ENCODE measurements at regions of chr4 and their contacts with region 1.

Region 1: DNA sequence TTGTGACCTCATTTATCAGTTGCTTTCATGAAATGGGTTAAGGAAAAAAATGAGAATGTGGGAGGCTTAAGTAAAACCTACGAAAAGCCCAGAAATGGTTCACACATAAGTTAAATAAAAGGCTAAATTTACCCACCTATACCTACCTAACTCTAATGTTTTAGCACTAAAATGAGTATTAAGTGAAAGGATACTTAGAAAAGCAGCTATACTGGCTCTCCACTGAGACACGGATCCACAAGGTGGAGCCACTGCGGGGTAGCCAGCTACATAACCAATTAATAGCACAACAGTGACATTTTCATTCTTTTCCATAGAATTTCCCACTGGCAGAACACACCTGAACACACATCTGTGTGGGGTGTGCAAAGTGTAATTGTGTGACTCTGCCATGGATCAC is 101.9 kb downstream of the MAML3 start:
- DNase-seq: peak in 2 of 4 experiments; percentile 24 to 30
- ATAC-seq: peak; percentile 78
- H3K4me3 ChIP-seq: no peak overlapping the region
- H3K27ac ChIP-seq: no peak overlapping the region
- H3K4me1 ChIP-seq: no peaks in the 10 kb centered on the region; a peak in 1 of 5 replicates
- H3K27me3 ChIP-seq: peaks cover 6 to 19% of the 10 kb centered on the region in 2 experiments; a peak in 4 of 5 replicates
- CTCF ChIP-seq: peak in 2 of 3 experiments; percentile 45 to 49; a peak in 4 of 6 replicates
- EP300 ChIP-seq: no peak
- POLR2A ChIP-seq: no peak
- RAD21 ChIP-seq: peak; percentile 17 to 44; a peak in 3 of 4 replicates

Region 2: GRCh38 chr4:140153718-140154571 is 101.9 kb after region 1 on chr4 and contains the start of gene MAML3:
- CTCF ChIA-PET with region 1: no interaction called
- POLR2A ChIA-PET with region 1: no interaction called
- in situ Hi-C with region 1: no loop called
- intact Hi-C with region 1: loop called (anchors 5 kb)
- DNase-seq: peak; percentile 77 to 90 (median 80)
- ATAC-seq: peak; percentile 73
- H3K4me3 ChIP-seq: peak within 1 kb of the TSS; percentile 61
- H3K27ac ChIP-seq: peak within 1 kb of the TSS; percentile 41
- H3K4me1 ChIP-seq: peaks cover 0 to 33% of the 10 kb centered on the region in 2 experiments; a peak in 3 of 5 replicates
- H3K27me3 ChIP-seq: peaks cover 7 to 22% of the 10 kb centered on the region in 2 experiments; a peak in 3 of 5 replicates
- CTCF ChIP-seq: no peak
- EP300 ChIP-seq: no peak
- POLR2A ChIP-seq: peak; percentile 36; the same call in 1 of the 2 replicates
- RAD21 ChIP-seq: no peak
- polyA plus RNA-seq, gene MAML3: 0.01 to 0.06 TPM